B cell (primary cell): ENCODE measurements at regions of chr20 and their contacts with region 1.

Region 1: DNA sequence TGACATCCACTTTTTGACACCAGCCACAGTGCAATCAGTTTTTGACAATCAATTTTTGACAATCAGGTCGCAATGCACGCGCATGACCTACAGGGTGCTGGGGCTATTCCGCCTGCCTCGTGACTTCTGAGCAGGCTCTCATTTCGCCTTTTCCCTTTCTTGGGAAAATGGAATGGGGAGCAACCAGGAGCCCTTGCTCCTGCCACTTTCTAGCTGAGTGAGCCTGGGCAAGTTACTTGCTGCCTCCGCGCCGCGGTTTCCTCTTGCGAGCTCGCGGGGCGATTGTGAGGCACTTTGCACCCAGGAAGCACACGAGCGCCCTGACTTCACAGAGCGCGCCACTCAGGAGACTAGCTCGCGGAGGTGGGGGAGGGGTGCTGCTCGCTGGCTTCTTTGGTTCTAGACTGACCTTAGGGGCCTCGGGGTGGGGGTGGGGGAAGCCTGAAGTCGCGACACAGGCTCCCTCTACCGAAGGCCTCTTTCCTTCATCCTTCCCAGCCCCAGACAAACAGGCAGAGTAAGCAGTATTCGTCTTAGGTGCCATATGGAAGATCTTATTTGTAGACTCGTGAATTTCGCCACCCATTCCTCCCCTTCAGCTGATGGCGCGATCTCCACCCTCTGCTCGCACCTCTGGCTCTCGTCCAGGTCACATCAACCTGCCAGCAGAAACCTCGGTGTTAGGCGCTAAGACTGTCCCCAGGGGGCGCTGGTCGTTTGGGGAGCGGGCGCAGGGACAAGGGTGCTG is 4.6 kb downstream of the TP53TG5 start:
- DNase-seq: peak; percentile 88
- ATAC-seq: peak; percentile 92
- H3K4me3 ChIP-seq: peak overlapping the region; percentile 42 to 64 (median 54)
- H3K4me3 Mint-ChIP-seq: peak overlapping the region; percentile 96
- H3K27ac ChIP-seq: peak overlapping the region in 1 of 2 donors; percentile 73
- H3K27ac Mint-ChIP-seq: peak overlapping the region; percentile 86
- H3K4me1 ChIP-seq: peaks cover 48 to 57% of the 10 kb centered on the region in 2 donors
- H3K4me1 Mint-ChIP-seq: peaks cover 56% of the 10 kb centered on the region
- H3K27me3 ChIP-seq: no peaks in the 10 kb centered on the region
- H3K27me3 Mint-ChIP-seq: no peaks in the 10 kb centered on the region
- CTCF ChIP-seq: peak; percentile 90

Region 2: GRCh38 chr20:45300961-45301360 is 72.6 kb before region 1 on chr20:
- CTCF ChIA-PET with region 1: no interaction called
- POLR2A ChIA-PET with region 1: no interaction called
- intact Hi-C with region 1: no loop called
- DNase-seq: no peak
- ATAC-seq: peak; percentile 51
- H3K4me3 ChIP-seq: no peak overlapping the region
- H3K4me3 Mint-ChIP-seq: no peak overlapping the region
- H3K27ac ChIP-seq: no peak overlapping the region
- H3K27ac Mint-ChIP-seq: no peak overlapping the region
- H3K4me1 ChIP-seq: no peaks in the 10 kb centered on the region
- H3K4me1 Mint-ChIP-seq: no peaks in the 10 kb centered on the region
- H3K27me3 ChIP-seq: peaks cover 0 to 37% (median 3%) of the 10 kb centered on the region in 4 experiments
- H3K27me3 Mint-ChIP-seq: peaks cover 60% of the 10 kb centered on the region
- CTCF ChIP-seq: peak; percentile 43

Region 3: DNA sequence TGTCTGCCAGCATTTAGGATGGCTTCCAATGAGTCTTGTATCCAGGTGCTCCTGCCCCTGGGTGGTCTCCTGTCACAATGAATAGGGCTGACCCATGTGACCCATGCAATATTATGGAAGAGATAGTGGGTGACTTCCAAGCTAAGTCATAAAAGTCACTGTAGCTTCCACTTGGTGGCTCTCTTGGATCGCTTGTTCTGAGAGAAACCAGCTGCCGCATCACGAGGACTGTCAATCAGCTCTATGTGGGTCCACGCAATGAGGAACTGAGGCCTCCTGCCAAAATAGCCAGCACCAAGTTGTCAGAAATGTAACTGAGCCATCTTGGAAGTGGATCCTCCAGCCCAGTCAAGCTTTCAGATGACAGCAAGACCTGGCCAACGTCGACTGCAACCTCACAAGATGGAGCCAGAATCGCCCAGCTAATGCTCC is 50.6 kb before region 1 on chr20:
- CTCF ChIA-PET with region 1: interaction called, 23 read pairs
- POLR2A ChIA-PET with region 1: interaction called, 12 read pairs
- intact Hi-C with region 1: loop called (anchors 2 kb)
- DNase-seq: peak; percentile 70
- ATAC-seq: peak; percentile 23
- H3K4me3 ChIP-seq: no peak overlapping the region
- H3K4me3 Mint-ChIP-seq: no peak overlapping the region
- H3K27ac ChIP-seq: no peak overlapping the region
- H3K27ac Mint-ChIP-seq: peak overlapping the region; percentile 15
- H3K4me1 ChIP-seq: peaks cover 28 to 41% of the 10 kb centered on the region in 2 donors
- H3K4me1 Mint-ChIP-seq: peaks cover 23% of the 10 kb centered on the region
- H3K27me3 ChIP-seq: peaks cover 0 to 3% (median 0%) of the 10 kb centered on the region in 4 experiments
- H3K27me3 Mint-ChIP-seq: no peaks in the 10 kb centered on the region
- CTCF ChIP-seq: no peak

Region 4: GRCh38 chr20:45387274-45387673 is 13.7 kb after region 1 on chr20:
- CTCF ChIA-PET with region 1: interaction called, 15 read pairs
- POLR2A ChIA-PET with region 1: no interaction called
- intact Hi-C with region 1: no loop called
- DNase-seq: no peak
- ATAC-seq: no peak
- H3K4me3 ChIP-seq: no peak overlapping the region
- H3K4me3 Mint-ChIP-seq: no peak overlapping the region
- H3K27ac ChIP-seq: no peak overlapping the region
- H3K27ac Mint-ChIP-seq: no peak overlapping the region
- H3K4me1 ChIP-seq: no peaks in the 10 kb centered on the region
- H3K4me1 Mint-ChIP-seq: peaks cover 9% of the 10 kb centered on the region
- H3K27me3 ChIP-seq: no peaks in the 10 kb centered on the region
- H3K27me3 Mint-ChIP-seq: no peaks in the 10 kb centered on the region
- CTCF ChIP-seq: no peak

Region 5: DNA sequence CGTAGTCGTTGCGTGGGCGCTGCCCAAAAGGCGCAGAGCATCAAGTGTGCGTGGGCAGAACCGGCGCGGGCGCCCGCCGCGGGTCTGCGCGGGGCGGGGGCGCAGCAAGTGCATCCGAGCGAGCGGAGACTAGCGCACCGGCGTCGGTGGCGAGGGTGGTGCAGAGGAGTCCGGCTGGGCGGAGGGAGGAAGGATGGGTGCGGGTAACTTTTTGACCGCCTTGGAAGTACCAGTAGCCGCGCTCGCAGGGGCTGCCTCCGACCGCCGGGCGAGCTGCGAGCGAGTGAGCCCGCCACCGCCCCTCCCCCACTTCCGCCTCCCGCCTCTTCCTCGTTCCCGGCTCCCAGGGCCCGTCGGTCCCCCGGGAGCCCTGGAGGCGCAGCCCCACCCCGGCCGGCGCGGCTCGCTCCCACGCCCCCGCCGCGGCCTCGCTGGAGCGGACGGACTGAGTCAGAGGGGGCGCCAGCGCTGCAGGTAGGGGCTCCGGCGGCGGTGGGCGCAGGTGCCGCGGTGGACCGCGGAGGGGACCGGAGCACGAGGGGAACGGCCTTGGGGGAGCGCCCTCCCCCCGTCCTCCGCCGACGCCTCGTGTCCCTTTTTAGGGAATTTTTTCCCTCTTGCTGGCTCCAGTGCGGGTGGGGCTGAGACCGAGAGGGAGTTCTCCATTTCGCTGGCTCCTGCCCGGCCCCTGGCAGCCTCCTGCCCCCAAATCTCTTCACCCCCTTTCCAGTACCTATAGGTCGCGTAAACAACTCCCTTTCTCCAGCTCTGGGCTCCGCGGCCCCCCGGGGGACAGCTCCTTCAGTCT is 32.9 kb after region 1 on chr20:
- CTCF ChIA-PET with region 1: interaction called, 12 read pairs
- POLR2A ChIA-PET with region 1: interaction called, 3 read pairs
- intact Hi-C with region 1: no loop called
- DNase-seq: peak; percentile 64
- ATAC-seq: peak; percentile 53
- H3K4me3 ChIP-seq: peak overlapping the region; percentile 43 to 70 (median 67)
- H3K4me3 Mint-ChIP-seq: peak overlapping the region; percentile 84
- H3K27ac ChIP-seq: no peak overlapping the region
- H3K27ac Mint-ChIP-seq: peak overlapping the region; percentile 76
- H3K4me1 ChIP-seq: peaks cover 17 to 33% of the 10 kb centered on the region in 2 donors
- H3K4me1 Mint-ChIP-seq: peaks cover 30% of the 10 kb centered on the region
- H3K27me3 ChIP-seq: no peaks in the 10 kb centered on the region
- H3K27me3 Mint-ChIP-seq: peaks cover 6% of the 10 kb centered on the region
- CTCF ChIP-seq: no peak

Region 6: GRCh38 chr20:45450097-45450818 is 76.7 kb after region 1 on chr20:
- CTCF ChIA-PET with region 1: interaction called, 18 read pairs
- POLR2A ChIA-PET with region 1: no interaction called
- intact Hi-C with region 1: loop called (anchors 1 kb)
- DNase-seq: peak; percentile 75
- ATAC-seq: peak; percentile 57
- H3K4me3 ChIP-seq: no peak overlapping the region
- H3K4me3 Mint-ChIP-seq: no peak overlapping the region
- H3K27ac ChIP-seq: no peak overlapping the region
- H3K27ac Mint-ChIP-seq: no peak overlapping the region
- H3K4me1 ChIP-seq: peaks cover 12 to 16% of the 10 kb centered on the region in 2 donors
- H3K4me1 Mint-ChIP-seq: peaks cover 17% of the 10 kb centered on the region
- H3K27me3 ChIP-seq: peaks cover 0 to 5% (median 0%) of the 10 kb centered on the region in 4 experiments
- H3K27me3 Mint-ChIP-seq: peaks cover 6% of the 10 kb centered on the region
- CTCF ChIP-seq: peak; percentile 75